ENCODE measurements at regions of chr2 and their contacts with region 1.

Region 1: GRCh38 chr2:134118279-134119116 is 135.4 kb upstream of the MGAT5 start:
- DNase-seq: peak; percentile 87
- ATAC-seq: peak; percentile 45 to 51

Region 2: GRCh38 chr2:134021830-134022524 is 96.5 kb before region 1 on chr2:
- intact Hi-C with region 1: no loop called
- DNase-seq: no peak
- ATAC-seq: no peak

Region 3: GRCh38 chr2:134245340-134245984 is 127.0 kb after region 1 on chr2:
- intact Hi-C with region 1: loop called in 1 of 2 experiments (anchors 5 kb)
- DNase-seq: peak; percentile 85
- ATAC-seq: peak; percentile 60 to 75

Region 4: GRCh38 chr2:134411828-134412638 is 293.5 kb after region 1 on chr2:
- intact Hi-C with region 1: loop called (anchors 2 to 10 kb)
- DNase-seq: peak; percentile 64
- ATAC-seq: peak; percentile 93 to 96

Region 5: GRCh38 chr2:134454931-134455330 is 336.4 kb after region 1 on chr2:
- intact Hi-C with region 1: loop called in 1 of 2 experiments (anchors 2 kb)
- DNase-seq: no peak
- ATAC-seq: no peak

Measured in left cardiac atrium (tissue), 4 donors.